Panc1 (cell line): ENCODE measurements at regions of chr20 and their contacts with region 1.

Region 1: GRCh38 chr20:35619196-35620095 is 3.8 kb downstream of the SPAG4 start:
- DNase-seq: peak; percentile 69
- ATAC-seq: peak; percentile 78
- H3K4me3 ChIP-seq: peak overlapping the region; percentile 62 to 81
- H3K27ac ChIP-seq: peak overlapping the region; percentile 65
- H3K4me1 ChIP-seq: no peaks in the 10 kb centered on the region; the same call in 1 of the 2 replicates
- H3K27me3 ChIP-seq: no peaks in the 10 kb centered on the region
- CTCF ChIP-seq: peak; percentile 86

Region 2: DNA sequence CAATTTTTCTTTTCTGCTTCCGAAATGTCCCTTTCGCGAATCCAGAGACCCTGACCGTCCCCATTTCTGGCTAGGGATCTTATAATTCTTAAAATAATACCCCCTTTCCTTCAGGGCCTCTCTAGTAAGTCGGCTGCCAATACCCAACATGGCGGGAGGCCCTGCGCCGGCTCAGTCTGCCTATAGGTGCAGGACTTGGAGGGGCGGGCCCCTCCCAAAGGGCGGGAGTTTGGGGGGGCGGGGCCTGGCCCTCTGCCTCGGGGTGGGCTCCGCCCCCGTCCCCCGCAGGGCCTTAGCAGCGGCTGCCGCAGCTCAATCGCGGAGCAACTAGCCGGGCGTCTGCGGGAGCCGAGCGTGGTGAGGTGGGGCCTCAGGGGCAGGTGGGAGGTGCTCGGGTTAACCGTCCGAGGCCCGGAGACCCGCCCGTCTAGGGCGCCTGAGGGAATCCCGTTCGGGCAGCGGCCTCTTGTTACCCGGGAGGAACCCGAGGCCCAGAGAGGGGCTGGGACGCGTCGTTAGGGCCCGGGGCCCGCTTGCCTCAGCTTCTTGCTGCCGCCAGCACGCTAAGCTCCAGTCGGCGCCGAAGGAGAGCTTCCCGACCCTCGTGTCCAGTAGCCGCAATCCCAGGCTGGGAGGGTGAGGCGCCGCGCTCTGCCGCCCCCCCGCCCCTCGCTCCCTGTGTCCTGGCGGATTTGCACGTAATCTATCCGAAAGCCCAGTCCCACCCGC is 164.4 kb before region 1 on chr20 and contains the start of gene CEP250:
- CTCF ChIA-PET with region 1: no interaction called
- POLR2A ChIA-PET with region 1: interaction called, 11 read pairs
- in situ Hi-C with region 1: no loop called
- intact Hi-C with region 1: no loop called
- DNase-seq: peak; percentile 93
- ATAC-seq: peak; percentile 94
- H3K4me3 ChIP-seq: peak within 1 kb of the TSS; percentile 80 to 92
- H3K27ac ChIP-seq: peak within 1 kb of the TSS; percentile 99
- H3K4me1 ChIP-seq: peaks cover 19% of the 10 kb centered on the region
- H3K27me3 ChIP-seq: no peaks in the 10 kb centered on the region
- CTCF ChIP-seq: no peak
- total RNA-seq, gene CEP250: 82.5 TPM

Region 3: DNA sequence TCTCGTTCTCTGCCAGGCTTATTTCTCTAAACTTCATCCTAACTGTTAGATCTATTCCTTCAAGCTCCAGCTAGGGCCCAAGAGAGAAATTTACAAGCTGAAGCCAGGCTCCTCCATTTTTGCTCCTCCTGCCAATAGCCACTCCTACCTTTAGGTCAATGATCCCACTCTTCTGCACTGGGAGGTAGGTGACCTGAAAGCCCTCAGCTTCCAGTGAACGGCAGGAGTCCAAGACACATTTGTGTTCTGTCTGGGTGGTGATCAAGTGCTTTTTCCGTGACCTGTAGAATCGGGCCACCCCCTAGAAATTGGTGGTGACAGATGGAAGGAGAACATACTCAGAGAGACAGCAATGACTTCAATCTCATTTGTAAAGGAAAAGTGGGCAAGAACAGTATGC is 70.8 kb after region 1 on chr20:
- CTCF ChIA-PET with region 1: interaction called, 13 read pairs
- POLR2A ChIA-PET with region 1: no interaction called
- in situ Hi-C with region 1: no loop called
- intact Hi-C with region 1: no loop called
- DNase-seq: no peak
- ATAC-seq: no peak
- H3K4me3 ChIP-seq: no peak overlapping the region
- H3K27ac ChIP-seq: no peak overlapping the region
- H3K4me1 ChIP-seq: no peaks in the 10 kb centered on the region
- H3K27me3 ChIP-seq: no peaks in the 10 kb centered on the region
- CTCF ChIP-seq: no peak

Region 4: DNA sequence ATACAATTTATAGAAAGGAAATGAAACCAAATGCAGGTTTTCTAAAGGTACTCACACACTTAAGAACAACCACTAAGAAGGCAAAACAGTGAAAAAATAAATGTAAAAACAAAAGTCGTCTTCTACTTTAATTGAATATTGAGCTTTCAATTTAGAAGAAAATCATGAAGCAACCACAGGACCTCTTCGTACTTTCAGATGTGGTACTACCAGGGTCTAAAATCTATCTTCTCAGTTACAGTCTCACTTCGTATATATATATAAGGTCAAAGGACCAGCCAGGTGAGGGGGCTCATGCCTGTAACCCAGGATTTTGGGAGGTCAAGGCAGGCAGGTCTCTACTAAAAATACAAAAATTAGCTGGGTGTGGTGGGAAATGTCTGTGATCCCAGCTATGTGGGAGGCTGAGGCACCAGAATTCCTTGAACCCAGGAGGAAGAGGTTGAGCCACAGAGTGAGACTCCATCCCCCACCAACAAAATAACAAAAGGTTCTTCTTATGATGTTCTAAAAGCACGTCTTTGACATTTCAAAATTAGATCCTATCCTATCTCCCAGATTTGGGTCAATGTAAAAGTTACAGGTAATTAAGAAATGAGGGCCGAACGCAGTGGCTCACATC is 92.3 kb after region 1 on chr20:
- CTCF ChIA-PET with region 1: no interaction called
- POLR2A ChIA-PET with region 1: interaction called, 12 read pairs
- in situ Hi-C with region 1: no loop called
- intact Hi-C with region 1: no loop called
- DNase-seq: no peak
- ATAC-seq: no peak
- H3K4me3 ChIP-seq: no peak overlapping the region
- H3K27ac ChIP-seq: no peak overlapping the region
- H3K4me1 ChIP-seq: no peaks in the 10 kb centered on the region
- H3K27me3 ChIP-seq: no peaks in the 10 kb centered on the region
- CTCF ChIP-seq: no peak